Cardiac septum (tissue), 1 donor: ENCODE measurements at regions of chr2 and their contacts with region 1.

Region 1: DNA sequence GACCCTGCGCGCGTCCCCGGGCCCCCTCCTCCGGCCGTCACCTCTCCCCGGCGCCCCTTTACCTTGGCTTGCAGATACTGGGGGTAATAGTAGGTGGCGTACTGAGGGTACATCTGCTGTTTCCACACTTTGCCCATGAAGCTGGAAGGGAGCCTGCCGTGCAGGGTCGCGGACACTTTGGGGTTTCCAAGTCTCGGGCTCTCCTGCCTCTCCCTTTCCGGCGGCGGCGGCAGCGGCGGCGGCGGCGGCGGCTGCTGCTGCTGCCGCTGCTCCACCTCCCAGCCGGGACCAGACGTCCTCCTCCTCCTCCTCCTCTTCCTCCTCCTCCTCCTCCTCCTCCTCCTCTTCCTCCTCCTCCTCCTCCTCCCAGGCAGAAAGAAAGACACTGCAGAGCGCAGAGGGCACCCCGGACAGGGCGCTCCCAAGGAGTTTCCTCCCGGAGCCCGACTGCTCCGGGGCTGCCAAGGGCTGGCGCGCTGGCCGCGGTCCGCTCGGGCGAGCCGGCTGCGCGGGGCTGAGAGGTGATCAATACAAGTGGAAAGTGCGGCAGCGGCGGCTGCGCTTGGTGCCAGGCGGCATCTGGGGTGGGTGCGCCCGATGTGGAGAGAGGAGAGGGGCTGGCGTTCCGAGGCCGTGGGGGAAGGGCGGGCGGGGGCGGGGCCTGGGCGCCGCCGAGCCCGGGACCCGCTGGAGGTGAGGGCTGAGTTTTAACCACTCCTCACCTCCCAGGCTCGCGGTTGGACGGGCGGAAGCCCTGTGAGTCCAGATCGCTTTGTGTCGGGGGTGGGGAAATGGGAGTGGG is at the start of gene RBMS1:
- DNase-seq: peak; percentile 82
- total RNA-seq, gene RBMS1: 75.3 TPM

Region 2: GRCh38 chr2:160294339-160294803 is 199.1 kb before region 1 on chr2:
- intact Hi-C with region 1: loop called (anchors 5 kb)
- DNase-seq: no peak

Region 3: GRCh38 chr2:160406591-160407392 is 86.6 kb before region 1 on chr2:
- intact Hi-C with region 1: loop called (anchors 5 kb)
- DNase-seq: peak; percentile 78

Region 4: GRCh38 chr2:160454070-160454797 is 39.2 kb before region 1 on chr2:
- intact Hi-C with region 1: loop called (anchors 5 kb)
- DNase-seq: no peak

Region 5: GRCh38 chr2:160533476-160533875 is 40.0 kb after region 1 on chr2:
- intact Hi-C with region 1: no loop called
- DNase-seq: no peak

Region 6: DNA sequence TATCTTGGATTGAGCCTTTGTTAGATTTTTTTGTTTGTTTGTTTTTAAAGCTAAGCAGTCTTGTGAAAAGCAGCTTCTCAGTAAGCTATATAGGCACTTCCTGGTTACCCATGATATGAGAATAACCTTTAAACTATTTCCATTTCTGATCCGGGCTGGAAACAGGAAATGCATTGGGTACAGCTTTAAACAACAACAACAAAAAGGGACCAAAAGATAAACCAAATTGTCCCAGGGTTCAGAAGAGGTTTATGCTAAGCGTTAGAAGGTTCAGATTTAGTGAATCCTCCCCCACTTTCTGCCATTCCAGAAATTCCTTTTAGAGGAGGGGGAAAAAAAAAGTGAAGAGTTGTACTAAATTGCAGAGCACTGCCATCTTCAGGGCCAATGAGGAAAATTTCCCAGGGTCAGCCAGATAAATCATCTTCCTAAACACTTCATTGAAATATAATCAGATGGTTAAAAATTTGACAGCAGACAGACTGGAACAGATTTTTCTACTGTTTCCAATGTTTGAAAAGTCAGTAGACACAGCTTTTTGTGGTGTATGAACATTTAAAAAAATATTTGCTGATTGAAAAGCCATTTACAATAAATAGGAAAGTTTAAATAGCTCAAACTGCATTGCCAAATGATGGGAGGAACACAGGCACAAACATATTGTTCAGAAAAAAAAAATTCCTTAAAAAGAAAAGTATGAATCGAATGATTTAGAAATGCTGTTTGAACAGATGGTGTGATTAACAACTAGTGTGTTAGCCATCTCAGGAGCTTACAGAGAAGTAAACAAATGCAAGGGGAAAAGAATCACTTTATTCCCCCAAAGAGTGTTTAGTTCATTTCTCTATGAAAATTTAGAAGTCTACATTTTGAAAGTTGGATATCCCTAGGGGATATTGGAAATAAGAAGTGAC is 476.9 kb after region 1 on chr2:
- intact Hi-C with region 1: loop called (anchors 5 kb)
- DNase-seq: no peak